ENCODE measurements at regions of chr18 and their contacts with region 1.

Region 1: GRCh38 chr18:74412116-74412880 is 44.8 kb downstream of the DIPK1C start:
- DNase-seq: peak; percentile 26 to 91 (median 84)
- H3K4me3 ChIP-seq: peak overlapping the region in 51 of 59 donors; percentile 6 to 62 (median 34)
- H3K27ac ChIP-seq: peak overlapping the region in 42 of 59 donors; percentile 1 to 76 (median 46)
- H3K27me3 ChIP-seq: peaks cover 0 to 11% (median 0%) of the 10 kb centered on the region in 45 donors
- CTCF ChIP-seq: peak in 5 of 56 donors; percentile 5 to 33 (median 17)

Region 2: GRCh38 chr18:74360852-74361655 is 51.2 kb before region 1 on chr18:
- intact Hi-C with region 1: loop called in 1 of 2 experiments (anchors 5 kb)
- DNase-seq: no peak
- H3K4me3 ChIP-seq: no peak overlapping the region
- H3K27ac ChIP-seq: no peak overlapping the region
- H3K27me3 ChIP-seq: peaks cover 0 to 4% (median 0%) of the 10 kb centered on the region in 45 donors
- CTCF ChIP-seq: no peak

Region 3: GRCh38 chr18:74450626-74451025 is 38.3 kb after region 1 on chr18:
- intact Hi-C with region 1: loop called (anchors 1 to 5 kb)
- DNase-seq: peak in 6 of 10 donors; percentile 42 to 70 (median 60)
- H3K4me3 ChIP-seq: peak overlapping the region in 5 of 59 donors; percentile 17 to 26 (median 19)
- H3K27ac ChIP-seq: peak overlapping the region in 16 of 59 donors; percentile 3 to 59 (median 35)
- H3K27me3 ChIP-seq: peaks cover 0 to 3% (median 0%) of the 10 kb centered on the region in 45 donors
- CTCF ChIP-seq: peak in 4 of 56 donors; percentile 5 to 17 (median 12)

Region 4: GRCh38 chr18:74524097-74524496 is 111.8 kb after region 1 on chr18:
- intact Hi-C with region 1: no loop called
- DNase-seq: peak in 2 of 10 donors; percentile 26 to 39
- H3K4me3 ChIP-seq: no peak overlapping the region
- H3K27ac ChIP-seq: peak overlapping the region; percentile 1 to 84 (median 67)
- H3K27me3 ChIP-seq: no peaks in the 10 kb centered on the region
- CTCF ChIP-seq: no peak

Measured in dorsolateral prefrontal cortex (tissue), 120 donors.